Activated CD8-positive, alpha-beta T cell treated with anti-CD3 and anti-CD28 coated beads for 36 hours (primary cell): ENCODE measurements at regions of chr1 and their contacts with region 1.

Region 1: GRCh38 chr1:92817986-92818764 is 13.7 kb upstream of the RPL5 start:
- DNase-seq: peak; percentile 30
- ATAC-seq: peak; percentile 69
- H3K4me3 Mint-ChIP-seq: no peak overlapping the region
- H3K27ac Mint-ChIP-seq: no peak overlapping the region
- H3K4me1 Mint-ChIP-seq: peaks cover 2% of the 10 kb centered on the region
- H3K27me3 Mint-ChIP-seq: peaks cover 10% of the 10 kb centered on the region
- CTCF ChIP-seq: peak; percentile 72

Region 2: DNA sequence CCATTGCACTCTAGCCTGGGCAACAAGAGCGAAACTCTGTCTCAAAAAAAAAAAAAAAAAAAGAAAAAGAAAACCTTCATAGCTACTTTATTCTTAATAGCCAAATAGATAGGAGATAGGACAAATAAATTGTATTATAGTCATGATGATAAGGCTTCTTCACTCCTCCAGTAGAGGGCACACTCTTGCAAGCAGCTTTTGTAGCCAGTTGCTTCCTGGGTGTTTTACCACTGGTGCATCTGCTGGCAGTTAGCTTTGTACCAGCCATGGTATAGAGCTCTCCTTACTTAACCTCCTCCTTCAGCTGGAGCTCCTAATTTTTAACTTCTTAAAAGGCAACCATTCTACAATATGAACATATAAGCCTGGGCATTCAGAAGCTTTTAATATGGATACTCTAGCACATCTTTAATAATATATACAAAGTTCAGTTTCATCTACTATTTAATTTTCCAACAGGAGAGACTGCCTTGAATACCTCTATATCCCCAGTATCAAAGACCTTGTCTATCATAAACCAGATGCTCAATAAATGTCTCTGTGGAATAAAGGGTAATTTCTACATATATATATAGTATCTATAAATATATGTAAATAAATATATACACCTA is 69.0 kb before region 1 on chr1:
- CTCF ChIA-PET with region 1: interaction called, 47 read pairs
- POLR2A ChIA-PET with region 1: no interaction called
- intact Hi-C with region 1: loop called (anchors 2 kb)
- DNase-seq: peak; percentile 51
- ATAC-seq: peak; percentile 74
- H3K4me3 Mint-ChIP-seq: no peak overlapping the region
- H3K27ac Mint-ChIP-seq: no peak overlapping the region
- H3K4me1 Mint-ChIP-seq: no peaks in the 10 kb centered on the region
- H3K27me3 Mint-ChIP-seq: no peaks in the 10 kb centered on the region
- CTCF ChIP-seq: peak; percentile 68

Region 3: DNA sequence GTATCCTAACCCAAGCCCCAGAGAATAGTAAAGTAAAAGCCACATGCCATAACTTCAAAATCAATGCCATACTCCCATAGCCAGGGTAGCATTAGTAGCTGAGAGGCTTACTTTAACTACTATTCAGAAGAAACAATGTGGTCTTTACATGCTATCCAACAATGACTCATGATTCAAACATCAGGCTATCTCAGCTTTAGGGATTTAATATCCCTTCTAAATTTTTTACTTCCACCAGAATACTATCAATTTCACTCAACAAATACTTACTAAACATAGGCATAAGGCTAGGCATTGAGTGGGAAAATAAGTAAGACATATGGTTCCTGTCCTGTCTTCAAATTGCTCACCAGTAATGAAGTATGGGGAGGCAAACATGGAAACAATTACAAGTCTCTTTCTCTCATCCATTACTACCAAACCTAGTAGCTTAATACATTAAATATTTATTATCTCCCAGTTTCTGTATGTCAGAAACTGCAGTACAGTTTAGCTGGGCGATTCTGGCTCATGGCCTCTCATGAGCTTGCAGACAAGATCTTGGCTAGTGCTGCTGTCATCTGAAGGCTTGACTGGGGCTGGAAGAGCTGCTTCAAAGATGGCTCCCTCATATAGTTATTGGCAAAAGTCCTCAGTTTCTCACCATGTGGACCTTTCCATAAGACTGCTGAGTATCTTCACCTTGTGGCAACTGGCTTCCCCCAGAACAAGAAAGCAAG is 64.0 kb before region 1 on chr1:
- CTCF ChIA-PET with region 1: interaction called, 47 read pairs
- POLR2A ChIA-PET with region 1: no interaction called
- intact Hi-C with region 1: loop called (anchors 2 kb)
- DNase-seq: no peak
- ATAC-seq: no peak
- H3K4me3 Mint-ChIP-seq: no peak overlapping the region
- H3K27ac Mint-ChIP-seq: no peak overlapping the region
- H3K4me1 Mint-ChIP-seq: no peaks in the 10 kb centered on the region
- H3K27me3 Mint-ChIP-seq: peaks cover 4% of the 10 kb centered on the region
- CTCF ChIP-seq: no peak

Region 4: DNA sequence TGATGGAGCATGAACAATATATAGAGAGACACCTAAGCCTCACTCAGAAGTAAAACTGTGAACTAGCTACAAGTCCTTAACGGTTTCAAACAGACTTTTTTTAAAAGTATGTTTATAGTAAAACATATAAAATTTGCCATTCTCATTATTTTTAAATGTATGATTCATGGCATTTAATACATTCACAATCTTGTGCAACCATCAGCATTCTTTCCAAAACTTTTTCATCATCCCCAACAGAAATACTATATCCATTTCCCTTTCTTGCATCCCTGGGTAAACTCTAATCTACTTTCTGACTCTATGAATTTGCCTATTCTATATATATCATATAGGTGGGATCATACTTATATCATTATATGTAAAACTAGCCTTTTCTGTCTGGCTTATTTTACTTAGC is 58.8 kb before region 1 on chr1:
- CTCF ChIA-PET with region 1: interaction called, 12 read pairs
- POLR2A ChIA-PET with region 1: no interaction called
- intact Hi-C with region 1: loop called (anchors 2 kb)
- DNase-seq: no peak
- ATAC-seq: no peak
- H3K4me3 Mint-ChIP-seq: no peak overlapping the region
- H3K27ac Mint-ChIP-seq: no peak overlapping the region
- H3K4me1 Mint-ChIP-seq: no peaks in the 10 kb centered on the region
- H3K27me3 Mint-ChIP-seq: peaks cover 4% of the 10 kb centered on the region
- CTCF ChIP-seq: no peak

Region 5: GRCh38 chr1:92792340-92792782 is 25.8 kb before region 1 on chr1:
- CTCF ChIA-PET with region 1: interaction called, 21 read pairs
- POLR2A ChIA-PET with region 1: no interaction called
- intact Hi-C with region 1: no loop called
- DNase-seq: no peak
- ATAC-seq: no peak
- H3K4me3 Mint-ChIP-seq: no peak overlapping the region
- H3K27ac Mint-ChIP-seq: no peak overlapping the region
- H3K4me1 Mint-ChIP-seq: peaks cover 2% of the 10 kb centered on the region
- H3K27me3 Mint-ChIP-seq: peaks cover 44% of the 10 kb centered on the region
- CTCF ChIP-seq: no peak

Region 6: GRCh38 chr1:92804721-92805169 is 13.4 kb before region 1 on chr1:
- CTCF ChIA-PET with region 1: interaction called, 10 read pairs
- POLR2A ChIA-PET with region 1: no interaction called
- intact Hi-C with region 1: no loop called
- DNase-seq: peak; percentile 18
- ATAC-seq: peak; percentile 45
- H3K4me3 Mint-ChIP-seq: no peak overlapping the region
- H3K27ac Mint-ChIP-seq: no peak overlapping the region
- H3K4me1 Mint-ChIP-seq: peaks cover 2% of the 10 kb centered on the region
- H3K27me3 Mint-ChIP-seq: peaks cover 1% of the 10 kb centered on the region
- CTCF ChIP-seq: no peak

Region 7: GRCh38 chr1:92831762-92832536 is 13.8 kb after region 1 on chr1 and contains the start of gene RPL5:
- CTCF ChIA-PET with region 1: interaction called, 17 read pairs
- POLR2A ChIA-PET with region 1: no interaction called
- intact Hi-C with region 1: no loop called
- DNase-seq: peak; percentile 98
- ATAC-seq: peak; percentile 93
- H3K4me3 Mint-ChIP-seq: peak within 1 kb of the TSS; percentile 99
- H3K27ac Mint-ChIP-seq: peak within 1 kb of the TSS; percentile 99
- H3K4me1 Mint-ChIP-seq: peaks cover 28% of the 10 kb centered on the region
- H3K27me3 Mint-ChIP-seq: no peaks in the 10 kb centered on the region
- CTCF ChIP-seq: peak; percentile 95
- total RNA-seq, gene RPL5: 1,782 to 1,792 TPM